ENCODE measurements at regions of chr7 and their contacts with region 1.

Region 1: DNA sequence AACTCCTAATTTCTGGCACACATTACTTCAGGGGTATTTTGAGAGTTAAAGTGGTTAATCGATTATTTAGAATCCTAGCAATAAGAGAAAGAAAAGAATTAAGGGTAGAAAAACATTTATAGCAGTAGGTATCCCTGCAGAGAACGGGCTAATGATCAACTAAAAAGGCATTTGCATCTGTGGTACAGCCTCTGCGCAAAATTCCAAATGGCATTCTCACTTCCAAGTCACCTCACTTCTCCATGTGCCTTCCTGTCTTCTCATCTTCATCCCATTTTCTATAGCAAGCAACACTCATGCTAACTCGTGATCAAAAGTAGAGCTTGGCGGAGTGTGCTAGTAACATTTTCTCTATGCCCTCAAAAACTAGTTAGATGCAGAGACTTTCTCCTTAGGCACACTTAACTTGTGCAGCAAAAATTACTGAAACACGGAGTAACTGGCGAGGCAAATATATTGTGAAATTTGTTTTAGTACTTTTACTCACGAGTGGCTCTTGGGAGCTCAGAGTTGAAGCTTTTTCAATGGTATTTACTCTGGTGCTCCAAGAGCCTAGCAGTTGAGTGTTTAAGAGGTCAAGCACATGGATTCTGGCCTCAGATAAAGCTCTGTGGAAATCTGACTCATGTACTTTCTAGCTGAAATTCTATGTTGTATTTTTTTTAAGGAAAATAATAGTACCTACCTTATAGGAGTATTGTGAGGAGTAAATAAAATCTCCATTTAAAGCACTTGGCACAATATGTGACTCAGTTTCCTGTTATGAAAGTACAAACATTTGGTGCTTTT is 65.1 kb downstream of the MET start:
- DNase-seq: no peak
- H3K4me3 ChIP-seq: no peak overlapping the region
- CTCF ChIP-seq: no peak

Region 2: GRCh38 chr7:116630932-116631745 is 106.0 kb before region 1 on chr7:
- in situ Hi-C with region 1: loop called (anchors 5 kb)
- DNase-seq: peak; percentile 49
- H3K4me3 ChIP-seq: no peak overlapping the region
- CTCF ChIP-seq: no peak

Region 3: GRCh38 chr7:116834815-116835533 is 97.9 kb after region 1 on chr7:
- in situ Hi-C with region 1: no loop called
- DNase-seq: no peak
- H3K4me3 ChIP-seq: no peak overlapping the region
- CTCF ChIP-seq: no peak